K562 (cell line): ENCODE measurements at regions of chr11 and their contacts with region 1.

Region 1: GRCh38 chr11:96342961-96343711 is at the start of gene MAML2:
- DNase-seq: peak; percentile 93 to 96 (median 94)
- ATAC-seq: peak; percentile 89
- H3K4me3 ChIP-seq: peak within 1 kb of the TSS; percentile 70
- H3K27ac ChIP-seq: peak within 1 kb of the TSS; percentile 59
- H3K4me1 ChIP-seq: peaks cover 22 to 34% of the 10 kb centered on the region in 2 experiments
- H3K27me3 ChIP-seq: no peaks in the 10 kb centered on the region
- CTCF ChIP-seq: peak; percentile 85 to 99 (median 98)
- EP300 ChIP-seq: peak; percentile 54; the same call in 1 of the 2 replicates
- POLR2A ChIP-seq: no peak
- RAD21 ChIP-seq: peak; percentile 94
- polyA plus RNA-seq, gene MAML2: 0.79 to 1.5 TPM

Region 2: GRCh38 chr11:96012086-96012824 is 330.9 kb before region 1 on chr11:
- CTCF ChIA-PET with region 1: no interaction called
- POLR2A ChIA-PET with region 1: no interaction called
- in situ Hi-C with region 1: no loop called
- intact Hi-C with region 1: loop called (anchors 2 kb)
- DNase-seq: peak in 3 of 4 experiments; percentile 11 to 55 (median 21)
- ATAC-seq: peak; percentile 88
- H3K4me3 ChIP-seq: no peak overlapping the region
- H3K27ac ChIP-seq: no peak overlapping the region
- H3K4me1 ChIP-seq: peaks cover 3 to 4% of the 10 kb centered on the region in 2 experiments; a peak in 3 of 5 replicates
- H3K27me3 ChIP-seq: no peaks in the 10 kb centered on the region
- CTCF ChIP-seq: peak; percentile 51 to 55 (median 55); a peak in 5 of 6 replicates
- EP300 ChIP-seq: no peak
- POLR2A ChIP-seq: no peak
- RAD21 ChIP-seq: peak; percentile 36 to 70; a peak in 3 of 4 replicates

Region 3: GRCh38 chr11:96091476-96091875 is 251.7 kb before region 1 on chr11:
- CTCF ChIA-PET with region 1: no interaction called
- POLR2A ChIA-PET with region 1: no interaction called
- in situ Hi-C with region 1: no loop called
- intact Hi-C with region 1: loop called (anchors 2 kb)
- DNase-seq: no peak
- ATAC-seq: peak; percentile 67
- H3K4me3 ChIP-seq: no peak overlapping the region
- H3K27ac ChIP-seq: no peak overlapping the region
- H3K4me1 ChIP-seq: peaks cover 2 to 4% of the 10 kb centered on the region in 2 experiments; a peak in 4 of 5 replicates
- H3K27me3 ChIP-seq: no peaks in the 10 kb centered on the region
- CTCF ChIP-seq: peak; percentile 26 to 38 (median 29); a peak in 3 of 6 replicates
- EP300 ChIP-seq: no peak
- POLR2A ChIP-seq: no peak
- RAD21 ChIP-seq: peak; percentile 29 to 58; a peak in 3 of 4 replicates

Region 4: DNA sequence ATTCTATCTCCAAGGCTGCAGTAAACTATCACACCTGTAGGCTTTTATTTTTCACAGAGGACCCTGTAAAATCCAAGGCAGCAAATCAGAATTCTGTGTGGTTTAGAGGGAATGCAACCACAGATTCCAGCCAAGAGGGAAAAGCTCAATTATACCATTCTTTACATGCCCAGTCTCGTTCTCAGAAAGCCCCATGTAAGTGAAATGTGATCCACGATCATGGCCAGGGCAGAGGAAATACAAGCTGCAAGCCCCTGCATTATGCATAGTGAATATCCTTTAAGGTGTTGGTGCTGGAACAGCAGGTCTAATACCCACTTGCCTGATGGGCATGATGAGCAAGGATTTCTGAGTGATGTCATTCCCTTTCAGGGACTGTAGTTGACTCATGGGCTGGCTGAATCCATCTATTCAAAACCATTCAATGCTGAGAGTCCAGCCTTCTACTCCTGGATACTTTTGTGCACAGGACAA is 220.5 kb before region 1 on chr11:
- CTCF ChIA-PET with region 1: no interaction called
- POLR2A ChIA-PET with region 1: no interaction called
- in situ Hi-C with region 1: no loop called
- intact Hi-C with region 1: no loop called
- DNase-seq: no peak
- ATAC-seq: no peak
- H3K4me3 ChIP-seq: no peak overlapping the region
- H3K27ac ChIP-seq: no peak overlapping the region
- H3K4me1 ChIP-seq: no peaks in the 10 kb centered on the region
- H3K27me3 ChIP-seq: no peaks in the 10 kb centered on the region
- CTCF ChIP-seq: no peak
- EP300 ChIP-seq: no peak
- POLR2A ChIP-seq: no peak
- RAD21 ChIP-seq: no peak

Region 5: GRCh38 chr11:96242971-96243647 is 100.0 kb before region 1 on chr11:
- CTCF ChIA-PET with region 1: no interaction called
- POLR2A ChIA-PET with region 1: interaction called, 7 read pairs
- in situ Hi-C with region 1: no loop called
- intact Hi-C with region 1: loop called (anchors 1 kb)
- DNase-seq: peak; percentile 92 to 96 (median 93)
- ATAC-seq: peak; percentile 96
- H3K4me3 ChIP-seq: peak overlapping the region; percentile 39
- H3K27ac ChIP-seq: peak overlapping the region; percentile 78
- H3K4me1 ChIP-seq: peaks cover 5 to 35% of the 10 kb centered on the region in 2 experiments; a peak in 4 of 5 replicates
- H3K27me3 ChIP-seq: no peaks in the 10 kb centered on the region
- CTCF ChIP-seq: no peak
- EP300 ChIP-seq: peak; percentile 58
- POLR2A ChIP-seq: peak; percentile 81; the same call in 1 of the 2 replicates
- RAD21 ChIP-seq: 0 out of 4 replicates have a peak, but pooled peaks of 1 of the 2 experiments have one; percentile 25

Region 6: GRCh38 chr11:96293598-96294021 is 49.5 kb before region 1 on chr11:
- CTCF ChIA-PET with region 1: no interaction called
- POLR2A ChIA-PET with region 1: no interaction called
- in situ Hi-C with region 1: no loop called
- intact Hi-C with region 1: loop called (anchors 5 kb)
- DNase-seq: no peak
- ATAC-seq: no peak
- H3K4me3 ChIP-seq: no peak overlapping the region
- H3K27ac ChIP-seq: no peak overlapping the region
- H3K4me1 ChIP-seq: peaks cover 0 to 6% of the 10 kb centered on the region in 2 experiments; a peak in 2 of 5 replicates
- H3K27me3 ChIP-seq: no peaks in the 10 kb centered on the region
- CTCF ChIP-seq: no peak
- EP300 ChIP-seq: no peak
- POLR2A ChIP-seq: no peak
- RAD21 ChIP-seq: no peak

Region 7: DNA sequence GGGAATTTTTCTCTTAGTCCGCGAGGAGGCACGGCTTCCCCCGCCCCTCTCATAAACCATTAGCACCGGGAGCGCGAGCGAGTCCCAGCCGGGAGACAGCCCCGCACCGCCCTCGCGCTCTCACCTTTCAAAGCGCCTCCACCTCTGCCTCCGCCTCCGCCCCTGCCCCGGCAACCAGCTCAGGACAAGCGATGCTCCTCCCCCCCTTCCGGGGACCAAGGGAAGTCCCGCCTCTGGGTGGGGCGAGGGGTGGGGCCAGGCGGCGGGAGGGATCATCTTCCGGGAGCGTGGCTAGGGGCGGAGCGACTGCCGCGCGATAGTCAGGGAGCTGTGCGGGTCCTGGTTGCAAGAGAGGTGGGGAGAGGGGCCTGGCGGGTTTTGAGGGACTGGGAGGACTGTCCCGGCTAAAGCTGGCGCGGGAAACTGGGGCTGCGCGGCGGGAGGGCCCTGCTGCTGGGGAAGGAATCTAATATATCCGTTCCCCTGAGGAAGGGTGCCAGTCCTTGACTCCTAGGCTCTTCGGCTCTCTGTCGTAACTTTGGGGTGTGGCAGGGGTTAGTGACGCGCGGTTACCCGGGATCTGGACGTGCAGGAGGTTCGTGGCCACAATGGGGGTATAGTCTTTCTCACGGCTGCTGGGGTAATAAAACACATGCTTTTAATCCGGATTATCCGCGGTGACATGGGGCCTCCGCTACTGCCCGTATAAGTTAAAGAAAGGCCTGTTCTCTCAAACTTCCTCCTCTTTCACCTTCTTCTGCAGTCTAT is 46.8 kb after region 1 on chr11 and contains the starts of genes CCDC82 and JRKL:
- CTCF ChIA-PET with region 1: no interaction called
- POLR2A ChIA-PET with region 1: interaction called, 4 read pairs
- in situ Hi-C with region 1: loop called (anchors 5 kb)
- intact Hi-C with region 1: no loop called
- DNase-seq: peak; percentile 97 to 98 (median 98)
- ATAC-seq: peak; percentile 97
- H3K4me3 ChIP-seq: peak within 1 kb of the TSS; percentile 67
- H3K27ac ChIP-seq: peak within 1 kb of the TSS; percentile 87
- H3K4me1 ChIP-seq: peaks cover 0 to 4% of the 10 kb centered on the region in 2 experiments; a peak in 1 of 5 replicates
- H3K27me3 ChIP-seq: no peaks in the 10 kb centered on the region
- CTCF ChIP-seq: peak in 1 of 3 experiments; percentile 15; a peak in 1 of 6 replicates
- EP300 ChIP-seq: no peak; the same call in 1 of the 2 replicates
- POLR2A ChIP-seq: peak; percentile 91
- RAD21 ChIP-seq: 0 out of 4 replicates have a peak, but pooled peaks of 1 of the 2 experiments have one; percentile 12
- polyA plus RNA-seq, gene CCDC82: 23.7 to 24.7 TPM
- polyA plus RNA-seq, gene JRKL: 4.8 to 6.8 TPM